SK-N-SH (cell line): ENCODE measurements at regions of chr2 and their contacts with region 1.

Region 1: DNA sequence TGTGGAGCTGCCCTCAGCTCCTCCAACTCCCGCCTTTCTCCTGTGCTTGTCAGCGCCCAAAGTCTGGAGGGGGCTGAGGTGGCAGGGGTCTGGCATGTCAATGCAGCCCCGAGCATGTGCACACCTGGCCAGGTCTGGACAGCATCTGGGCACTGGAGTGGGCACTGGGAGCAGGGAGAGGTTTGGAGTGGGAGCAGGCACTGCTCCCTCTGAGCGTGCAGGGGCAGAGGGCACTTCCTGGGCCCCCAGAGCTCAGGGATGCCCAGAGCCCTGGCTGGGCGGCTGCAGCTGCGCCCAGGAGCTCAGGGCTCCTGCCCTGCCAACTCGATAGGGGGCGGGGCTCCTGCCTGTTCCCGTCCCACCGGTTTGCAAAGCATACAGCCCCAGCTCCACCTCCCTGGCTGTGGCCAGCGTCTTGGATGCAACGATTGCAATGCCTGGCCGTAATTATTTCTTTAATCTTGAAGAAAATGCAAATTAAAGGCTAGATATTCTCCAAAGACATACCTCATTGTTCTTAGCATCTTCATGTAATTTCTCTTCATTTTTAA is 57.4 kb upstream of the LDAH start:
- DNase-seq: no peak
- H3K4me3 ChIP-seq: no peak overlapping the region
- H3K27ac ChIP-seq: no peak overlapping the region
- H3K4me1 ChIP-seq: peaks cover 0 to 20% of the 10 kb centered on the region in 2 experiments; a peak in 2 of 4 replicates
- H3K27me3 ChIP-seq: no peaks in the 10 kb centered on the region
- CTCF ChIP-seq: no peak
- EP300 ChIP-seq: no peak
- RAD21 ChIP-seq: no peak

Region 2: GRCh38 chr2:20900052-20900636 is 19.8 kb after region 1 on chr2:
- CTCF ChIA-PET with region 1: interaction called, 10 read pairs
- POLR2A ChIA-PET with region 1: no interaction called
- DNase-seq: peak; percentile 64
- H3K4me3 ChIP-seq: no peak overlapping the region
- H3K27ac ChIP-seq: peak overlapping the region in 1 of 2 experiments; percentile 87; a peak in 2 of 4 replicates
- H3K4me1 ChIP-seq: peaks cover 0 to 14% of the 10 kb centered on the region in 2 experiments; a peak in 2 of 4 replicates
- H3K27me3 ChIP-seq: peaks cover 17% of the 10 kb centered on the region
- CTCF ChIP-seq: no peak
- EP300 ChIP-seq: peak in 1 of 2 experiments; percentile 85; a peak in 2 of 4 replicates
- RAD21 ChIP-seq: peak; percentile 45; the same call in 1 of the 2 replicates